Heart right ventricle (tissue), 16 donors: ENCODE measurements at regions of chr9 and their contacts with region 1.

Region 1: GRCh38 chr9:134413890-134414731 is 87.9 kb downstream of the RXRA start:
- DNase-seq: peak; percentile 69 to 76
- ATAC-seq: peak; percentile 30 to 77 (median 62)
- H3K4me3 ChIP-seq: no peak overlapping the region
- H3K27ac ChIP-seq: peak overlapping the region; percentile 37 to 69 (median 46)
- H3K4me1 ChIP-seq: peaks cover 54 to 79% (median 76%) of the 10 kb centered on the region in 9 donors
- H3K27me3 ChIP-seq: no peaks in the 10 kb centered on the region
- CTCF ChIP-seq: no peak

Region 2: GRCh38 chr9:134301387-134302129 is 112.6 kb before region 1 on chr9:
- intact Hi-C with region 1: no loop called
- DNase-seq: peak in 1 of 2 donors; percentile 4
- ATAC-seq: no peak
- H3K4me3 ChIP-seq: no peak overlapping the region
- H3K27ac ChIP-seq: no peak overlapping the region
- H3K4me1 ChIP-seq: peaks cover 0 to 4% (median 0%) of the 10 kb centered on the region in 9 donors
- H3K27me3 ChIP-seq: no peaks in the 10 kb centered on the region
- CTCF ChIP-seq: no peak

Region 3: DNA sequence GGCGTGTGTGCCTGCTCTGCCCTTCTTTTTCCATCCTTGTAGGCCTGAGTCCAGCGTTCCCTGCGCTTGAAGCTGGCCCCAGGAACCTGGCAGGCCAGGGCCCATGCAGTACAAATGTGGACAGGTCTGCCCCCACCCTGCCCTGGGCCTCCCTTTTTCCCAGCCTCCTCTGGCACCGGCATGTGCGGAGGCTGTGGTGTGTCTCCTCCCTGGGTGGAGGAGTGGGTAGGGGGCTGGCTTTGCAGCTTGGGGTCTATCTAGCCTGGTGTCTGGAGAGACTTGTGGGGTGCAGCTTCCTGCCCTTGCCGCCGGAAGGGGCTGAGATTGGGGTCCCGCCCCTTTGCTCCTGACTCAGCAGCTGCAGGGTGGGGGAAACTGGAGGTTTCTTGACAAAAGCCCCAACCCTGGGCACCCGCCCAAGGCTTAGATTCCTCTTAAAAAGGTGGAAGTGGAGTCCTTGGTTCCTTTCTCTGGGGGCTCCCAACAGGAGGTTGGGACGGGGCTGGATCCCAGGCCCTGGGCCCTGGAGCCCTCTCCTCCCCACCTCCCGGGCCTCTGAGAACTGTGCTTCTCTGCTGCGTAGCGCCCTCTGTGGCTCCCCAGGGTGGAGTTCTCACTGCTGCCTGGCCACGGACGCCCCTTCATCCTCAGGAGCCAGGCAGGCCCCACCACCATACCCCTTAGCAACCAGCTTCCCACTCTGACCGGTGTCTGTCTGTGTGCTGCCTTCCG is 69.9 kb before region 1 on chr9:
- intact Hi-C with region 1: loop called in 1 of 10 experiments (anchors 10 kb)
- DNase-seq: peak; percentile 57 to 66
- ATAC-seq: peak in 5 of 8 donors; percentile 3 to 9 (median 4)
- H3K4me3 ChIP-seq: peak overlapping the region in 1 of 10 donors; percentile 6
- H3K27ac ChIP-seq: peak overlapping the region; percentile 17 to 91 (median 70)
- H3K4me1 ChIP-seq: peaks cover 81 to 100% (median 98%) of the 10 kb centered on the region in 9 donors
- H3K27me3 ChIP-seq: no peaks in the 10 kb centered on the region
- CTCF ChIP-seq: peak in 4 of 9 donors; percentile 7 to 28 (median 21)

Region 4: GRCh38 chr9:134378901-134379338 is 35.2 kb before region 1 on chr9:
- intact Hi-C with region 1: loop called in 2 of 10 experiments (anchors 5 kb)
- DNase-seq: peak; percentile 51 to 68
- ATAC-seq: peak; percentile 7 to 54 (median 31)
- H3K4me3 ChIP-seq: peak overlapping the region in 1 of 10 donors; percentile 8
- H3K27ac ChIP-seq: peak overlapping the region; percentile 0 to 98 (median 86)
- H3K4me1 ChIP-seq: peaks cover 77 to 100% (median 100%) of the 10 kb centered on the region in 9 donors
- H3K27me3 ChIP-seq: no peaks in the 10 kb centered on the region
- CTCF ChIP-seq: no peak

Region 5: GRCh38 chr9:134433101-134433500 is 19.0 kb after region 1 on chr9:
- intact Hi-C with region 1: no loop called
- DNase-seq: no peak
- ATAC-seq: no peak
- H3K4me3 ChIP-seq: no peak overlapping the region
- H3K27ac ChIP-seq: peak overlapping the region in 7 of 10 donors; percentile 15 to 86 (median 26)
- H3K4me1 ChIP-seq: peaks cover 39 to 81% (median 71%) of the 10 kb centered on the region in 9 donors
- H3K27me3 ChIP-seq: no peaks in the 10 kb centered on the region
- CTCF ChIP-seq: no peak